Common myeloid progenitor, CD34-positive (primary cell): ENCODE measurements at regions of chr15 and their contacts with region 1.

Region 1: GRCh38 chr15:63945007-63945788 is 101.1 kb downstream of the DAPK2 start:
- DNase-seq: peak; percentile 39 to 65 (median 60)
- H3K4me3 ChIP-seq: no peak overlapping the region
- H3K27ac ChIP-seq: no peak overlapping the region
- H3K4me1 ChIP-seq: peaks cover 0 to 10% (median 4%) of the 10 kb centered on the region in 4 experiments
- H3K27me3 ChIP-seq: no peaks in the 10 kb centered on the region

Region 2: DNA sequence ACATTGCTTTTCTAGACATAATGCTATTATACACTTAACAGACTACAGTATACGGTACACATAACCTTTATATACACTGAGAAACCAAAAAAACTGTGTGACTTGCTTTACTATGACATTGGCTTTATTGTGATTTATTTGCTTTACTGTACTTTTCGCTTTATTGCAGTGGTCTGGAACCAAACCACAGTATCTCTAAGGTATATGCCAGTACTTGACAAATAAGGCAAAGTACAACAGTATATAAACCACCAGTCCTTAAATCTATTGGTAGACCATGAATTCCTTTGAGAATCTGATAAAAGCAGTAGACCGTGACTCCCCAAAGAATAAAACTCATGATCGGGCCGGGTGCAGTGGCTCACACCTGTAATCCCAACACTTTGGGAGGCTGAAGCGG is 161.8 kb before region 1 on chr15:
- CTCF ChIA-PET with region 1: no interaction called
- POLR2A ChIA-PET with region 1: no interaction called
- DNase-seq: no peak
- H3K4me3 ChIP-seq: no peak overlapping the region
- H3K27ac ChIP-seq: no peak overlapping the region
- H3K4me1 ChIP-seq: no peaks in the 10 kb centered on the region
- H3K27me3 ChIP-seq: no peaks in the 10 kb centered on the region

Region 3: DNA sequence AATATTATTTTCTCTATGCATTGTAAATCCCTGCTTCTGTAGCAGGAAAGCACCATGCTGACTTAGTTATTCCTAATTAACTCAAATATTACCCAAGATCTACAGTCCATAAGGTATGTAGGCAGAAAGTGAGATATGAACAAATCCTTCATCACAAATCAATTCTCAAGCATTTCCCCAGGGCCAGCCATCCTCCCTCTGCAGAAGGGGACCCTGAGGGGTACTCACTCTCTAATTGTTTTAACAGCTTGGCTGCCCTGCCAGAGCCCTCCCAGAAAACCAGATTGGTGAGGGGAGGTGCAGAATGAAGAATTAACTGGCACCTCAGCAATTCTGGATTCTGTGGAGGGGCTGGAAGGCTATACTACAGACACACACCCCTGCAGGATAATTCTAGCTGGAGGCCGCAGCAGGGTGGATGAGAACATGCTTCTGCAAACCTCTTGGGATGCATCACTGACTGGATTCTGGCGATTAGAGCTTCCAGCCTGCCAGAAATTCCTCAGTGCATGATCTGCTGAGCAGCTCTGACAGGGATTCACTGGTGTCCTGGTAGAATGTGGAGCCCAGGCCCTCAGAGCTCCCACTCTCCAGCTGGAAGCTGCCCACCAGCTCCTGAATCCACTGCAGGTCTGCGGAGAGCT is 22.8 kb before region 1 on chr15:
- CTCF ChIA-PET with region 1: interaction called, 10 read pairs
- POLR2A ChIA-PET with region 1: no interaction called
- DNase-seq: no peak
- H3K4me3 ChIP-seq: no peak overlapping the region
- H3K27ac ChIP-seq: no peak overlapping the region
- H3K4me1 ChIP-seq: peaks cover 0 to 11% (median 3%) of the 10 kb centered on the region in 4 experiments
- H3K27me3 ChIP-seq: no peaks in the 10 kb centered on the region

Region 4: GRCh38 chr15:63986751-63987341 is 41.6 kb after region 1 on chr15:
- CTCF ChIA-PET with region 1: interaction called, 22 read pairs
- POLR2A ChIA-PET with region 1: interaction called, 9 read pairs
- DNase-seq: peak; percentile 70 to 93 (median 91)
- H3K4me3 ChIP-seq: peak overlapping the region in 2 of 7 experiments; percentile 1 to 19
- H3K27ac ChIP-seq: peak overlapping the region in 1 of 2 experiments; percentile 55
- H3K4me1 ChIP-seq: peaks cover 19 to 60% (median 54%) of the 10 kb centered on the region in 4 experiments
- H3K27me3 ChIP-seq: no peaks in the 10 kb centered on the region